ENCODE measurements at regions of chr20 and their contacts with region 1.

Region 1: DNA sequence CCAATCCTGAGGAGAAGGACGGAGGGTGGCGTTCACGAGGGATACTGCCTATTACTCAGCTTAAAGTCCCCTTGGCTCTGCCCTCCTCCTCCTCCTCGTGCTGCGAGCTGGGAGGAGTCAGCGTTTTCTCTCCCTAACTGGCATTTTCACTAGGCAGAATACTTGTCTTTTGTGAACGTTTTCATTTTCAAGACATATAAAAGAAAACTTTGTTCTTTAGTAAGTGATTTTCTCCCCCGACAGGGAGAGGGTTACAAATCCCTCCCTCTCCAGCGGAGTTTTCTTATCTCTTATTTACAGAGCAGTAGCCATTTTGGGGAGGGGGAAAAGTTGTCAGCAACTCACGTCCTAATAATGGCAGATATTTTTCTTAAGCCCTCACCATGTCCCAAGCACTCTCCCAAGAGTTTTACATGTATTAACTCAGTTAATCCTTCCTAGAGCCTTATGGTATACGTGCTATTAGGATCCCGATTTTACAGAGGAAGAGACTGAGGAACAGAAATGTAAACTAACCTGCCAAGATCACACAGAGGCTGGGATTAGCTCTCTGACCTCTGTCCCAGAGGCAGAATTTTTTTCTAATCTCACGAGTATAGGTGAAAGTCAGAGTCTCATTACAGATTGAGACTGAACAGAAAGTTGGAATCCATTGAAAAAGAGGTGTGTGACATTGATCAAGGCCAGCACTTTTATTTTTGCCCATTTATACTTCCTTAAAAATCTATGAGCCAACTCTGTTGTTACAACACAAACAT is 30.0 kb upstream of the ZNF217 start:
- DNase-seq: no peak
- ATAC-seq: peak; percentile 76
- H3K4me3 Mint-ChIP-seq: peak overlapping the region; percentile 83
- H3K27ac Mint-ChIP-seq: peak overlapping the region; percentile 93
- H3K4me1 Mint-ChIP-seq: peaks cover 51% of the 10 kb centered on the region
- H3K27me3 Mint-ChIP-seq: no peaks in the 10 kb centered on the region
- CTCF ChIP-seq: no peak

Region 2: DNA sequence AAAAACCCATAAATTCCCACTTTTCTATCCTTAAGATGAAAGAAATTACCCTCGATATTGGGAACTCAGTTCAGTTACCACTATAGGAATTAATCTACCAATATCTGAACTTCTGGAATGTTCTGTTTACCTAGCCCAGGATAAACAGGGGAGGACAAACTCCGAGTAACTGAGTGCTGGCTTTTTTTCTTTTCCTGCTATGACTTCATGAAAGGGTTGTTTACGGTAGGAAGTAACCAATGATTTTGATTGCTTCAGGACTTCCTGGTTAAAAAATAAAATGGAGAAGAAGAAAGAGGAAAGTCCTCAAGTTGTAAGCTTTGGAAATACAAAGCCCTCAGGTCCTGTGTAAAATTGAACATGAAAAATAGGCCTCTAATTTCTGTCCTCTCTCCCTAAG is 197.7 kb before region 1 on chr20:
- CTCF ChIA-PET with region 1: no interaction called
- POLR2A ChIA-PET with region 1: no interaction called
- intact Hi-C with region 1: no loop called
- DNase-seq: no peak
- ATAC-seq: no peak
- H3K4me3 Mint-ChIP-seq: no peak overlapping the region
- H3K27ac Mint-ChIP-seq: no peak overlapping the region
- H3K4me1 Mint-ChIP-seq: no peaks in the 10 kb centered on the region
- H3K27me3 Mint-ChIP-seq: peaks cover 11% of the 10 kb centered on the region
- CTCF ChIP-seq: no peak

Region 3: GRCh38 chr20:53468587-53468986 is 155.0 kb before region 1 on chr20:
- CTCF ChIA-PET with region 1: no interaction called
- POLR2A ChIA-PET with region 1: no interaction called
- intact Hi-C with region 1: no loop called
- DNase-seq: no peak
- ATAC-seq: no peak
- H3K4me3 Mint-ChIP-seq: no peak overlapping the region
- H3K27ac Mint-ChIP-seq: no peak overlapping the region
- H3K4me1 Mint-ChIP-seq: peaks cover 6% of the 10 kb centered on the region
- H3K27me3 Mint-ChIP-seq: peaks cover 7% of the 10 kb centered on the region
- CTCF ChIP-seq: no peak

Region 4: DNA sequence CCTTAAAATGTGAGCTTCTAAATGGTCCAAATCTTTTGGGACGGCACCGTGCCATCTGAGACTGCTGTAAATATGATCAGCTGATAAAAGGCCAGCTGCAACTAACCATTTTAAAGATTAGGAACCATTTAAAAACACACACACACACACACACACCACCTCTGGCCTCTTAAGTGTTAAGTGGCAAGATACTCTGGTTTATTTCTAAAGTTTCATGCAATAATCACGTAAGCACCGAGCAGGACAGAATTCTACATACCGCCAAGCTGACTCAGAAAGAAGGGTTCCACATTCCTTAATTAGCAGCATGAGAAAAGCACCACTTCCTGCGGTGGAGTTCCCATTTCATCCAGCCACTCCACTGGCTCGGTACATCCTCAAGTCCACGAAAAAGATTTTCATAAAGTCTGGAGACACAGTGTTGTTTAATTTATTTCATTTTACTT is 12.2 kb before region 1 on chr20:
- CTCF ChIA-PET with region 1: interaction called, 14 read pairs
- POLR2A ChIA-PET with region 1: interaction called, 43 read pairs
- intact Hi-C with region 1: loop called (anchors 1 kb)
- DNase-seq: no peak
- ATAC-seq: no peak
- H3K4me3 Mint-ChIP-seq: peak overlapping the region; percentile 24
- H3K27ac Mint-ChIP-seq: peak overlapping the region; percentile 46
- H3K4me1 Mint-ChIP-seq: peaks cover 31% of the 10 kb centered on the region
- H3K27me3 Mint-ChIP-seq: no peaks in the 10 kb centered on the region
- CTCF ChIP-seq: no peak

Region 5: GRCh38 chr20:53635221-53635924 is 11.7 kb after region 1 on chr20:
- CTCF ChIA-PET with region 1: no interaction called
- POLR2A ChIA-PET with region 1: interaction called, 13 read pairs
- intact Hi-C with region 1: no loop called
- DNase-seq: no peak
- ATAC-seq: no peak
- H3K4me3 Mint-ChIP-seq: peak overlapping the region; percentile 5
- H3K27ac Mint-ChIP-seq: peak overlapping the region; percentile 74
- H3K4me1 Mint-ChIP-seq: peaks cover 42% of the 10 kb centered on the region
- H3K27me3 Mint-ChIP-seq: no peaks in the 10 kb centered on the region
- CTCF ChIP-seq: no peak

Region 6: DNA sequence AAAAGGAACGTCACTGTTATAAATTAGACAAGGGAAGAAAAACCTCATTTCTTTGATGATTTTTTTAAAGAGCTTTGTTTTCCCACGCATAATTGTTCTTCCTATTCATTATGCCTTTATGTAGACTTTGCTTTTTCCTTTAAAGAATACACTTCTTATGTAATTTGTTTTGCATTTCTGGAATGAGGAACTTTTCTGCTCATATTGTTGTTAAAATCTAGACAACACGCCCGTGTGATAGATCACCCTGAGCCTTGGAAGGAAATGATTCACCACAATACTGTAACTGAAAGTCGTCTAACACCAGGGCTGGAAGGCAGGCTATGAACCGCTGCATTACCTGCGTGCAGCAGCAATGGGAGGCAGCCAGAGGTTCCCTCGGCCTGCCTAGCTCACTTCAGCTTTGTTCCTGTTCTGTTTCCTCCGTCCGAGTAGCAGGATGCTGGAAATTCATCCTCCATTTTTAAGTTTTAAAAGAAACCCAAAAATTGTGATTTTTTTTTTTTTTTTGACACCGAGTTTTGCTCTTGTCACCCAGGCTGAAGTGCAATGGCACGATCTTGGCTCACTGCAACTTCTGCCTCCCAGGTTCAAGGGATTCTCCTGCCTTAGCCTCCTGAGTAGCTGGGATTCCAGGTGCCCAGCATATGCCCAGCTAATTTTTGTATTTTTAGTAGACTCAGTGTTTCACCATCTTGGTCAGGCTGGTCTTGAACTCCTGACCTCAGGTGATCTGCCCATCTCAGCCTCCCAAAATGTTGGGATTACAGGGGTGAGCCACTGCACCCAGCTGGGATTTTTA is 19.6 kb after region 1 on chr20:
- CTCF ChIA-PET with region 1: interaction called, 4 read pairs
- POLR2A ChIA-PET with region 1: interaction called, 17 read pairs
- intact Hi-C with region 1: loop called (anchors 2 kb)
- DNase-seq: no peak
- ATAC-seq: peak; percentile 94
- H3K4me3 Mint-ChIP-seq: peak overlapping the region; percentile 78
- H3K27ac Mint-ChIP-seq: peak overlapping the region; percentile 94
- H3K4me1 Mint-ChIP-seq: peaks cover 36% of the 10 kb centered on the region
- H3K27me3 Mint-ChIP-seq: no peaks in the 10 kb centered on the region
- CTCF ChIP-seq: no peak

Region 7: DNA sequence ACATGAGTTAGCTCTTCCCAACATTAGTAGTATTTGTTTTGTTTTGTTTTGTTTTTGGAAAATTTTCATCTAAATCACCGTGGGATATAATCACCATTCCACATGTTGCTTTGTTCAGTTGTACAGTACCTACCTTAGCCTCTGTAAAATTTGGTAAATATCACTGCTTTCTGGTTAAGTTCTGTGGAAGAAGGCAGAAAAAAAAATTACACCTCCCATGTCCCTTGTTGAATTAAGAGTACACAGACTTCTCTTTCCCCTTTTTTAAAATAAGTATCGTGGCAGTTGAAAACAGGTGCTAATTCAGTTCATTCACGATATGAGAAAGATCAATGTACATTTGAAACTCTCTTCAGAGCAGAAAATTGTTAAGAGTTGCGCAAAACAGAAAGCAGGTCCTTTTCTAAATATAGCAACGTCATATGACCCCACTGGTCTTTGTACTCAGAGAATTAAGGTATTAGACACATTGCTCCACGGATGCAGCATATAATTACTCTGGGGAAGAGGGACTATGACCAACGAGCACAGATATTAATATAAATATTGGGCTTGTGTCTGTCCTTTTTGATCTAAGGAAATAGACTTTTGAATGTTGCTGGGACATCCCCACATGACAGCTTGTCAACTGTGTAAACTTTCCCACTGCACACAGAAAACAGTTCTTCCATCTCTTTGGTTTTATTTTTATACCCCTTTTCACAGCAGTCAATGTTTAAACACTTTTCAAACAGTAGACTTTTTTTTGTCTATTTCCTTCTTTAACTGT is 28.6 kb after region 1 on chr20:
- CTCF ChIA-PET with region 1: interaction called, 3 read pairs
- POLR2A ChIA-PET with region 1: interaction called, 5 read pairs
- intact Hi-C with region 1: loop called (anchors 2 kb)
- DNase-seq: no peak
- ATAC-seq: peak; percentile 43
- H3K4me3 Mint-ChIP-seq: peak overlapping the region; percentile 61
- H3K27ac Mint-ChIP-seq: peak overlapping the region; percentile 90
- H3K4me1 Mint-ChIP-seq: peaks cover 50% of the 10 kb centered on the region
- H3K27me3 Mint-ChIP-seq: no peaks in the 10 kb centered on the region
- CTCF ChIP-seq: no peak

Region 8: GRCh38 chr20:53677447-53678314 is 54.0 kb after region 1 on chr20:
- CTCF ChIA-PET with region 1: no interaction called
- POLR2A ChIA-PET with region 1: no interaction called
- intact Hi-C with region 1: no loop called
- DNase-seq: no peak
- ATAC-seq: no peak
- H3K4me3 Mint-ChIP-seq: peak overlapping the region; percentile 17
- H3K27ac Mint-ChIP-seq: peak overlapping the region; percentile 54
- H3K4me1 Mint-ChIP-seq: peaks cover 26% of the 10 kb centered on the region
- H3K27me3 Mint-ChIP-seq: no peaks in the 10 kb centered on the region
- CTCF ChIP-seq: no peak

Region 9: GRCh38 chr20:53934421-53935343 is 311.0 kb after region 1 on chr20:
- CTCF ChIA-PET with region 1: interaction called, 4 read pairs
- POLR2A ChIA-PET with region 1: interaction called, 11 read pairs
- intact Hi-C with region 1: no loop called
- DNase-seq: no peak
- ATAC-seq: peak; percentile 41
- H3K4me3 Mint-ChIP-seq: peak overlapping the region; percentile 60
- H3K27ac Mint-ChIP-seq: peak overlapping the region; percentile 90
- H3K4me1 Mint-ChIP-seq: peaks cover 89% of the 10 kb centered on the region
- H3K27me3 Mint-ChIP-seq: no peaks in the 10 kb centered on the region
- CTCF ChIP-seq: no peak

Measured in activated B cell treated with CpG ODN at 0.5 μM for 24 hours (primary cell).